ENCODE measurements at regions of chr16 and their contacts with region 1.

Region 1: GRCh38 chr16:88777471-88778270 is 7.3 kb downstream of the PIEZO1 start:
- DNase-seq: no peak
- ATAC-seq: no peak
- H3K4me3 Mint-ChIP-seq: no peak overlapping the region
- H3K27ac Mint-ChIP-seq: no peak overlapping the region
- H3K4me1 Mint-ChIP-seq: peaks cover 43% of the 10 kb centered on the region
- H3K27me3 Mint-ChIP-seq: no peaks in the 10 kb centered on the region

Region 2: DNA sequence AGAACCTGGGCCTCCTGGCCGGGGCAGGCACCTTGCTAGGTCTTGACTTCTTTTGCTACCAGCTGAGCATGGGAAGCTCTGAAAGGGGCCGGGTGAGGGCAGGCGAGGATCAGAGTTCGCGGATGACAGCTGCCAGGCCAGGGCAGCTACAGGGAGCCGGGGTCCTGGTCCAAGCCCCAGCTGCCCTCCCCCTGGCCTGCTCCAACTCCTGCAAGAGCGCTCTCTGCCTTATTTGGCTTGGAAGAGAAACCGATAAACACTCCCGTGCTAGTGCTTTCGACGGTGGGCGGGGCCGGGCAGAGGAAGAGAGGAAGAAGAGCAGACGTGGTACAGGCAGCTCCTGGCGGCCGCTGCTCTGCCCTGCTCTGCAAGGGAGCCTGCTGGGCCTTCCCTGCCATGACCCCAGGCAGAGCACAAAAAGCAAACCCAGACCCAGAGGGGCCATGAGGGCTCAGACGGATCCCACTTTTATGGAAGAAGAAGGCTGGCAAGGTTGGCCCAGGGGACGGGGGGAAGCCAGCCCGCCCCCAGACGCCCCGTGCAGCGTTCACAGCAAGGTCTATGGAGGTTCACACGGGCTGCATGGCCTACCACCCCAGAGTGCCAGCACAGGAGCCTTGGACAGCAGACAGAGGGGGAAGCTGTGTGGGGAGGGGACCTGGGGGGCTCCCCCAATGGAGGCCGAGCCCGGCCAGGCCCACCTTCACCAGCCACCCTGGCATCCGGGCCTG is 18.3 kb before region 1 on chr16:
- CTCF ChIA-PET with region 1: interaction called, 4 read pairs
- POLR2A ChIA-PET with region 1: interaction called, 3 read pairs
- intact Hi-C with region 1: loop called in 1 of 2 experiments (anchors 1 kb)
- DNase-seq: peak; percentile 65
- ATAC-seq: peak; percentile 86
- H3K4me3 Mint-ChIP-seq: no peak overlapping the region
- H3K27ac Mint-ChIP-seq: no peak overlapping the region
- H3K4me1 Mint-ChIP-seq: peaks cover 11% of the 10 kb centered on the region
- H3K27me3 Mint-ChIP-seq: no peaks in the 10 kb centered on the region

Region 3: DNA sequence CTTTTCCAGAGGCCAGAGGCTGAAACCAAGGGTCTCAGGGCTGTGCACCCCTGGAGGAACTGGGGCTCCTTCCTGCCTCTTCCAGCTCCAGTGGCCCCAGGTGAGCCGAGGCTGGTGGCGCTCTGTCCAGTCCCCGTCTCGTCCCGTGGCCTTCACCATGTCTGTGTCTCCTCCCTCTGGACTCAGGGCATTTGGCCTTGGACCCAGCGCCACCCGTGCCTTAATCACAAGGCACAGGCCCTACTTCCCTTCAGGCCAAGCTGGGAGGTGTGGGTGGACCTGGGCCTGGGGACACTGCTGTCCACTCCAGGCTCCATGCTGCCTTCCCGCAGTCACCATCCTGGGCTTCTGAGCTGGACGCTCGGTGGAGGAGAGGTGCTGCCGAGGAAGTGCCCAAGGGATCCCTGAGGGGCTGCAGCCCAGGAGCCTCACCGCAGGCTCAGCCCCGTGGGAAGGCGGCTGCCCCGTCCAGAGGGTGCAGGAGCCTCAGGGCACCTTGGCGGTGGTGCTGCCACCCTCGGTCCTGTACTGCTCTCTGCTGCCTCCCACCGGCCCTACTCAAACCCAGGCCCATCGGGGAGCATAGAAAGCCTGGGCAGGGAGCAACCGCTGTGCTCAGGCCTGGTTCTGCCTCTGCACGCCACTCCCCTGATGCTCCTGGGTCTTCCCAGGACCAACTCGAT is 43.6 kb after region 1 on chr16:
- CTCF ChIA-PET with region 1: no interaction called
- POLR2A ChIA-PET with region 1: no interaction called
- intact Hi-C with region 1: no loop called
- DNase-seq: no peak
- ATAC-seq: no peak
- H3K4me3 Mint-ChIP-seq: no peak overlapping the region
- H3K27ac Mint-ChIP-seq: no peak overlapping the region
- H3K4me1 Mint-ChIP-seq: no peaks in the 10 kb centered on the region
- H3K27me3 Mint-ChIP-seq: no peaks in the 10 kb centered on the region

Region 4: GRCh38 chr16:88866151-88866920 is 88.7 kb after region 1 on chr16 and contains the start of gene PABPN1L:
- CTCF ChIA-PET with region 1: no interaction called
- POLR2A ChIA-PET with region 1: no interaction called
- intact Hi-C with region 1: no loop called
- DNase-seq: no peak
- ATAC-seq: no peak
- H3K4me3 Mint-ChIP-seq: no peak within 1 kb of the TSS
- H3K27ac Mint-ChIP-seq: no peak within 1 kb of the TSS
- H3K4me1 Mint-ChIP-seq: peaks cover 2% of the 10 kb centered on the region
- H3K27me3 Mint-ChIP-seq: peaks cover 8% of the 10 kb centered on the region
- total RNA-seq, gene PABPN1L: not detected